ENCODE measurements at regions of chr2 and their contacts with region 1.

Region 1: GRCh38 chr2:108988796-108989713 is at the start of gene EDAR:
- DNase-seq: peak; percentile 70
- H3K4me3 ChIP-seq: peak within 1 kb of the TSS; percentile 35 to 43 (median 39)
- H3K27ac ChIP-seq: no peak within 1 kb of the TSS
- H3K4me1 ChIP-seq: peaks cover 17% of the 10 kb centered on the region
- H3K27me3 ChIP-seq: no peaks in the 10 kb centered on the region
- CTCF ChIP-seq: peak; percentile 89 to 96
- total RNA-seq, gene EDAR: 0.38 to 2.2 TPM

Region 2: DNA sequence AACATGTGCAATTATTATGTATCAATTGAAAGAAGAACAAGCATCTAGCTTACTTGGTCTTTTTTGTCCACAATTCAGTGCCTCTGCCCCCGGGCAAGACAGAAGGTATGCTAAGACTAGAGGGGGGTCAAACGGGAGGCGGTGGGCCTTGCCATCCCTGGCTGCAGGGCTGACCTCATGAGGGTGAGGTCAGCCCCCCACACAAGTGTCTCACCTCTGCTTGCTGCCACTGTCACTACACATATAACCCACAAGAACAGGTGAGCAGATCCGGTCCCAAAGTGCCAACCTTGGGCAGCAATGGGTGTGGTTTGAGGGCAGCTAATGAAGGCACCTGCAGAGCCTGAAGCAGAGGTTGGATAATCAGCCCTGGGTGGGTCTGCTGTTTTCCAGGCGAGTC is 71.5 kb before region 1 on chr2:
- CTCF ChIA-PET with region 1: no interaction called
- dilution Hi-C with region 1: no loop called
- in situ Hi-C with region 1: no loop called
- intact Hi-C with region 1: no loop called
- DNase-seq: no peak
- H3K4me3 ChIP-seq: no peak overlapping the region
- H3K27ac ChIP-seq: no peak overlapping the region
- H3K4me1 ChIP-seq: peaks cover 16% of the 10 kb centered on the region
- H3K27me3 ChIP-seq: peaks cover 16% of the 10 kb centered on the region
- CTCF ChIP-seq: no peak

Region 3: DNA sequence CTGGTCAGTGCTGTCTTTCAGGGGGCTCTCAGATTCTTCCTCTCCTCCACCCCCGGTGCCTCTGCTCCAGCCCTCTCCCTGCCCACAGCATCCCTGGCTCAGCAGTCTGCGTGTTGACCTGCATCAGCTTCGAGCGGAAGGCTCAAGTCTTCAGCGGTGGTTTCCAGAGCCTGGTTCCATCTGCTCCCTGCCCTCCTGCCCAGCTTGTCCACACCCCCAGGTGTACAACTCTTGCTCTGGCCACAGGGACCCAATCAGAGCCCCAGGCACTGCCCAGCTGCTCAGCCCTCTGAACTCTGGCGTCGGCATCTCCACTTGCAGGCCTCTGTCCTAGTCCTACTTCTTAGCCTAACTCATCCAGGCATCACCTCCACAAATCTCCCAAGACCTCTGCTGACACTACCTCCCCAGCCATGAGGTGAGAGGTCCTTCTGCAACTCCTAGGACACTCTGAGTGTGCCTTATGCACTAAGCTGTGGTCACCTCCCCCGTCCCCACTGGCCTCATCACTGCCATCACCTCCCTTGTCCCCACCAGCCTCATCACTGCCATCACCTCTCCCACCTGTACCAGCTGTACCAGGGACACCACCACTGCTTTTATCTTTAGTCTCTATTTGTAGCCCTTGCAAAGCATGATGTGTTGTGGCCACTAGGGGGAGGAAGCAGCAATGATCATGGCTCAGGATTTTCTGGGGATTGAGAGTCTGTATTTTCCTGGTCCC is 61.0 kb before region 1 on chr2:
- CTCF ChIA-PET with region 1: no interaction called
- dilution Hi-C with region 1: no loop called
- in situ Hi-C with region 1: loop called in 1 of 2 experiments (anchors 5 kb)
- intact Hi-C with region 1: loop called (anchors 1 kb)
- DNase-seq: peak; percentile 45
- H3K4me3 ChIP-seq: no peak overlapping the region
- H3K27ac ChIP-seq: no peak overlapping the region
- H3K4me1 ChIP-seq: peaks cover 20% of the 10 kb centered on the region
- H3K27me3 ChIP-seq: peaks cover 11% of the 10 kb centered on the region
- CTCF ChIP-seq: peak; percentile 84 to 93

Region 4: GRCh38 chr2:108944601-108945331 is 44.3 kb before region 1 on chr2:
- CTCF ChIA-PET with region 1: no interaction called
- dilution Hi-C with region 1: no loop called
- in situ Hi-C with region 1: no loop called
- intact Hi-C with region 1: loop called (anchors 1 kb)
- DNase-seq: no peak
- H3K4me3 ChIP-seq: no peak overlapping the region
- H3K27ac ChIP-seq: no peak overlapping the region
- H3K4me1 ChIP-seq: no peaks in the 10 kb centered on the region
- H3K27me3 ChIP-seq: no peaks in the 10 kb centered on the region
- CTCF ChIP-seq: peak; percentile 5 to 50

Region 5: DNA sequence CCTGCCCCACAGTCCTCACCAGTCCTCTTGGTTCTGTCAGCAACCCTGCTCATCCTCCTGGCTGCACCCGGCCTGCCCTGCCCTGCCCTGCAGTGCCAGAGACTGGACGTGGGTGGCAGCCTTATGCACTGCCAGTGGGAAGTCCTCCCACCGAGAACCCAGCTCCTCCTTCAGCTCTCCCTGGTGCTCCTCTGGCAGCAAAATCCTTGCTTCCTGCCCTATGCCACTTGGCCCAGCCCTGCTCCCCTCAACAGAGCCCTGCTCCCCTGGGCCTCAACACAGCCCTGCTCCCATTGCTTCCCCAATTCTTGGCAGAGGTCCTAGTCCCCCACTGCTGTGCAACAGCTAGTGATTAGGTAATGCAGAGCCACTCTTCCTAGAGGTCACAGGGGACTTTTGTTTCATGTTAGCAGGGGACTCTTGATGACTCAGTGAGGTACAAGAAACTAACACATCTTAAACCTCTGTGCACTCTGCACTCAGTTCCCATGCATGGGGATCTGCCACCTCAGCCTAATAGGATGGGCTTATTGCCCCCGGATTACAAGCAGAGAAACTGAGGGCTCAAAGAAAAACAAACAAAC is 58.0 kb after region 1 on chr2:
- CTCF ChIA-PET with region 1: no interaction called
- dilution Hi-C with region 1: loop called (anchors 5 kb)
- in situ Hi-C with region 1: no loop called
- intact Hi-C with region 1: loop called (anchors 10 kb)
- DNase-seq: no peak
- H3K4me3 ChIP-seq: no peak overlapping the region
- H3K27ac ChIP-seq: no peak overlapping the region
- H3K4me1 ChIP-seq: no peaks in the 10 kb centered on the region
- H3K27me3 ChIP-seq: peaks cover 6% of the 10 kb centered on the region
- CTCF ChIP-seq: peak in 1 of 2 donors; percentile 19

Region 6: GRCh38 chr2:109062859-109063700 is 74.0 kb after region 1 on chr2:
- CTCF ChIA-PET with region 1: no interaction called
- dilution Hi-C with region 1: no loop called
- in situ Hi-C with region 1: no loop called
- intact Hi-C with region 1: no loop called
- DNase-seq: no peak
- H3K4me3 ChIP-seq: no peak overlapping the region
- H3K27ac ChIP-seq: no peak overlapping the region
- H3K4me1 ChIP-seq: no peaks in the 10 kb centered on the region
- H3K27me3 ChIP-seq: peaks cover 6% of the 10 kb centered on the region
- CTCF ChIP-seq: no peak